AG04450 (cell line): ENCODE measurements at regions of chr3 and their contacts with region 1.

Region 1: DNA sequence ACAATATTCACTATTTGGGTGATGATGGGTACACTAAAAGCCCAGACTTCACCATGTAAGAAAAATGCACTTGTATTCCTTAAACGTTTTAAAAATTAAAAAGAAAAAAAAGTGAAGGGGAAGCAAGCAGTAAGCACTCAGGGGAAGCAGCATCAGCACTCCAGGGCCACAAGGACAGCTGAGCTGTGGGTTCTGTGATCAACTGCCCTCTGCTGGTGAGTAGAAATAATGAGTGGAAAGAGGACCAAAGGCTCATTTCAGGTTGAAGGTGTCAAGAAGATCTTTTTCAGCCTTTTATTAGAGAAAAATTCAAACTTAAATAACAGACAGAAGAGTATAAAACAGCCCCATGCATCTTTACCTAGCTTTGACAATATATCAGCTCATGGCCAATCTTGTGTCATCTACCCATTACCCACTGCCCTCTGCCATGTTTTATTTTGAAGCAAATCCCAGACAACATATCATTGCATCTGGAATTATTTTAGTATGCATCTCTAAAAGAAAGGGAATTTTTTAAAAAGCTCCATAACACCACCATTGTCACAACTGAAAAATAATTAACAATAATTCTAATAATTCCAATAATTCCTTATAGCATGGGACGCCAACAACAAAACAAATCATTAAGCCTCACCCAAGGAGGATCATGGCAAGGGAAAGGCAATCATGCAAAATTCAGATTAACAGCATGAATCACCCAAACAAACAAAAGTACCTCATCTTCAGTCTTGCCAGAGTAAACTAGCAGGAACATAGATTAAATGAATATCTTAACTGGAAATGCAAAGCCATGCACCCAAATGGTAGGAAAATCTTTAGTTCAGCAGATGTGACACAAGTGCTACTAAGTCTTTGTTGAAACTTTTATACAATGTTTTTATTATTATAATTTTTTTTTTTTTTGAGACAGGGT is 42.5 kb downstream of the TAMM41 start:
- DNase-seq: no peak
- H3K4me3 ChIP-seq: no peak overlapping the region
- H3K27ac ChIP-seq: no peak overlapping the region
- H3K27me3 ChIP-seq: no peaks in the 10 kb centered on the region
- CTCF ChIP-seq: peak; percentile 76

Region 2: GRCh38 chr3:11288786-11289682 is 515.2 kb before region 1 on chr3:
- CTCF ChIA-PET with region 1: no interaction called
- POLR2A ChIA-PET with region 1: no interaction called
- DNase-seq: peak; percentile 74
- H3K4me3 ChIP-seq: peak overlapping the region; percentile 10; the same call in 1 of the 2 replicates
- H3K27ac ChIP-seq: peak overlapping the region; percentile 77
- H3K27me3 ChIP-seq: no peaks in the 10 kb centered on the region
- CTCF ChIP-seq: no peak

Region 3: GRCh38 chr3:11651900-11652299 is 152.3 kb before region 1 on chr3:
- CTCF ChIA-PET with region 1: interaction called, 15 read pairs
- POLR2A ChIA-PET with region 1: no interaction called
- DNase-seq: no peak
- H3K4me3 ChIP-seq: no peak overlapping the region
- H3K27ac ChIP-seq: no peak overlapping the region
- H3K27me3 ChIP-seq: no peaks in the 10 kb centered on the region
- CTCF ChIP-seq: peak; percentile 46

Region 4: DNA sequence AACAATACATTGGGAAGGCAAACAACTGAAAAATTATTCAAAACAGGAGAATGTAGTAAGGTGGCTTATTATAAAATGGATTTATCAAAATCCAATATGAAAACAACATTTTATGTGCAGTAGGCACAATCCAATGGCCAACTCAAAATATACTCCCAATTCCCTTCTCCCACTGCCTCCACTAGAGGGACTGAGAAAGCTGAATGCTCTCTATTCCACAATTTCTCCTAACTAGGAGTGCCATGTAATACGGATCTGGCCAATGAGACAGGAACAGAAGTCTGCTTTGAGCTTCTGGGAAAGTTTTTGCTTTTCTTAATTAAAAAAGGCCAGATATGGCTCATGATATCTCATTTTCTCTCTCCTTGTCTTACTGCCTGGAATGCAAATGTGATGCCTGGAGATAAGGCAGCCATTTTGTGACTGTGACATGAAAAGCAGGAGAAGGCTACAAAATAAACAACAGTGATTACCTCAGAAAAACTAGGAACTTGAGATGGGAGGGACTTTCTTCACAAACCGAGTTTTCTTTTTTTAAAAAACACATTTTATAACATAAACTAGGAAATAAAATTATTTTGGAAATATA is 141.7 kb before region 1 on chr3:
- CTCF ChIA-PET with region 1: interaction called, 13 read pairs
- POLR2A ChIA-PET with region 1: no interaction called
- DNase-seq: no peak
- H3K4me3 ChIP-seq: no peak overlapping the region
- H3K27ac ChIP-seq: no peak overlapping the region
- H3K27me3 ChIP-seq: no peaks in the 10 kb centered on the region
- CTCF ChIP-seq: peak; percentile 54

Region 5: DNA sequence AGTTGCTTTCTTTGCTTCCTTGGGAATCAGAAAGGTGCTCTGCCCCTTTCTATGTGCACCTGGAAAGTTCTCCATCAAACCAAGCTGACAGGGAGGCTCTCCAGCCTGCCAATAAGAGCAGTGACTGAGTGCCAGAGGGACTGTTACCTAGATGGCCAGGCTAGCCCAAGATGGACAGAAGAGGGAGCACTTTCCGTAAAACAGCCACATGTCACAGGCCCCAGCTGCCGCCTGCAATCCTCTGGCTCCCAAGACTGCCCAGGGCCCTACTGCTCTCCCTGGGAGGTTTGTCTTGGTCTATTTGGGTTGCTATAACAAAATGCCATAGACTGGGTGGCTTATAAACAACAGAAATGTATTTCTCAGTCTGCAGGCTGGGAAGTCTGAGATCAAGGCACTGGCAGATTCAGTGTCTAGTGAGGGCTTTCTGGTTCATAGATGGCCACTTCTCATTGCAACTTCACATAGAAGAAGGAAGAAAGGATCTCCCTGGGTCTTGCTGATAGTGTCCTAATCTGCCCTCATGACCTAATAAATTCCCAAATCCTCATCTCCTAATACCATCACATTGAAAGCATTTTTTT is 29.8 kb before region 1 on chr3:
- CTCF ChIA-PET with region 1: interaction called, 27 read pairs
- POLR2A ChIA-PET with region 1: no interaction called
- DNase-seq: no peak
- H3K4me3 ChIP-seq: no peak overlapping the region
- H3K27ac ChIP-seq: no peak overlapping the region
- H3K27me3 ChIP-seq: peaks cover 6% of the 10 kb centered on the region
- CTCF ChIP-seq: peak; percentile 66

Region 6: GRCh38 chr3:11791339-11792128 is 12.7 kb before region 1 on chr3:
- CTCF ChIA-PET with region 1: interaction called, 26 read pairs
- POLR2A ChIA-PET with region 1: no interaction called
- DNase-seq: no peak
- H3K4me3 ChIP-seq: no peak overlapping the region
- H3K27ac ChIP-seq: no peak overlapping the region
- H3K27me3 ChIP-seq: no peaks in the 10 kb centered on the region
- CTCF ChIP-seq: no peak

Region 7: DNA sequence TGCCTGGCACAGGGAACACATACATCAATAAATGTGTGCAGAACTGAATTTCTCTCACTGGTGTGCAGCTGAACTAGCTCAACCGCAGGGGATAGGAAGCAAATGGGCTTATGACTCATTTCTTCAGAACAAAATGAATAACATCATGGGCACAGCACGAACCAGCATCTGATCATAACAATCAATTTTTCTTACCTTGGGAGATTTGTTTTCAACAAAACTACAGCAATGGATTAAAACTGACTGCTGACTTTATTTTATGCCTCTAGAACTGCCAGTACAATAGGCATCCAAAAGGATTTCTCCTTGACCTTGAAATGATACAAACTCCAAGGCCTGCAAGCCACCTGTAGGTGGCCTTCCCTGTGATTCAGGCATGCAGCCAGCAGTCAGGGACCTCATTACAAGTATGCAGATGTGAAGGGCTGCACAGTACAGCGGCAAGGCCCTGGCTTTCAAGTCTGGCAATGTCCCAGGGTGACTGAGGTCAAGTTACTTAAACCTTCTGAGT is 16.4 kb after region 1 on chr3:
- CTCF ChIA-PET with region 1: interaction called, 17 read pairs
- POLR2A ChIA-PET with region 1: no interaction called
- DNase-seq: no peak
- H3K4me3 ChIP-seq: no peak overlapping the region
- H3K27ac ChIP-seq: peak overlapping the region; percentile 41
- H3K27me3 ChIP-seq: no peaks in the 10 kb centered on the region
- CTCF ChIP-seq: peak; percentile 24; the same call in 1 of the 2 replicates